Activated CD4-positive, alpha-beta memory T cell treated with anti-CD3 and anti-CD28 coated beads, Interleukin-2, amount 10 ng/mL, durations not matched to agents 7 days and 5 days (primary cell): ENCODE measurements at regions of chr12 and their contacts with region 1.

Region 1: DNA sequence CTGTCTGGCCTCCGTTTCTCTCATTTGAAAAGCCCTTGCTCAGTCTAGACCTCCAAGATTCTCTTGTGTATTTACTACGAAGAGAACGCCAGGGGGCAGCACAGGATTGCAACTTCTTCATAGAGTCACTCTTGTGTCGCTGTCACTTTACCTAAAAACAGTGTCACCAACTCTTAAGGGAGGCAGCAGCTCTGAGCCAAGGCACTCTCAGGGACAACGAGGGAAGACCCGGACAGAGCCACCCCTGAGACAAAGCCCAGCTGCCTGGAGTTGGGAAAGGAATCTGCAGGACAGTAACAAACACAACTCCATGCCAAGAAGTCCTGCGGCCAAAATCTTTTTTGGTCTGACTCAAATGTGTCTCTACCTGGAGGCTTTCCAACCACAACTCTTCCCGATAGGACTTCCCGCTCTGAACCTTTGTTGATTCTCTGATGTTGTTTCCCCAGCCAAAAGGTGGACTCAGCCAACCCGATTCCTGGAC is 9.6 kb upstream of the RPAP3 start:
- DNase-seq: peak; percentile 81
- H3K4me3 Mint-ChIP-seq: no peak overlapping the region
- H3K27ac Mint-ChIP-seq: no peak overlapping the region
- H3K4me1 Mint-ChIP-seq: peaks cover 22% of the 10 kb centered on the region
- H3K27me3 Mint-ChIP-seq: no peaks in the 10 kb centered on the region

Region 2: GRCh38 chr12:47758834-47759690 is 43.6 kb after region 1 on chr12 and contains the start of gene RAPGEF3:
- CTCF ChIA-PET with region 1: interaction called, 53 read pairs
- POLR2A ChIA-PET with region 1: no interaction called
- DNase-seq: peak; percentile 79
- H3K4me3 Mint-ChIP-seq: peak within 1 kb of the TSS; percentile 70
- H3K27ac Mint-ChIP-seq: no peak within 1 kb of the TSS
- H3K4me1 Mint-ChIP-seq: peaks cover 50% of the 10 kb centered on the region
- H3K27me3 Mint-ChIP-seq: peaks cover 2% of the 10 kb centered on the region
- total RNA-seq, gene RAPGEF3: 1.4 to 1.6 TPM

Region 3: DNA sequence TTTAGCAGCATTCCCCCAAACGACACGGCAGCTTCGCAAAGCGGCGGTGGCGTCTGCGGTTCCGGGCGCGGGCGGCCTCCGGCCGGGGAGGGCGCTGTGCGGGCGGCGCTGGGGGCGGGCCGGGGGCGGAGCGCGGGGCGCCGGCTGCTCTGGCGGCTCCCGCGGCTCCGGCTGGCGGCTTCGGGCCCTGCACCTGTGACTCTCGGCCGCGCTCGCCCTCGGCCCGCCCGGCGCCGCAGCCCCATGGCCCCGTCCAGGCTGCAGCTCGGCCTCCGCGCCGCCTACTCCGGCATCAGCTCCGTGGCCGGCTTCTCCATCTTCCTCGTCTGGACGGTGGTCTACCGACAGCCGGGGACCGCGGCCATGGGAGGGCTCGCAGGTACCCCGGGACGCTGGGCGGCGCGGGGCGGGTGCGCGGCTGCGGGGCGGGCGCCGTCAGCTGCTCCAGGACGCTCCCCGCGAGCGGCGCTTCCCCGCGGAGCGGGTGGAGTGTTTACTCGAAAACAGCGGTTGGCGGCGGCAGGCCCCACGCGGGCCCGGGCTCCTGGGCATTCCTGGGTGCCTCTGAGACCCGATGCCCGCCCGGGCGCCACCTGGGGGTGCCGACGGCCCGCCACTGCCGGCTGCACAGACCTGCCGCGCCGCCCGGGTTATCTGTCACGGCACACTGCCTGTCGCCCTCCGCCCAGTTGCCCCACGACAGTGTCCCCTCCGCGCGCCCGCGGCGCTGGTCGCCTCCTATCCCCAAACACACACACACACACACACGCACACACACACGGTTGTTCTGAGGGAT is 57.8 kb after region 1 on chr12 and contains the start of gene SLC48A1:
- CTCF ChIA-PET with region 1: interaction called, 115 read pairs
- POLR2A ChIA-PET with region 1: interaction called, 4 read pairs
- DNase-seq: peak; percentile 75
- H3K4me3 Mint-ChIP-seq: peak within 1 kb of the TSS; percentile 91
- H3K27ac Mint-ChIP-seq: peak within 1 kb of the TSS; percentile 36
- H3K4me1 Mint-ChIP-seq: peaks cover 45% of the 10 kb centered on the region
- H3K27me3 Mint-ChIP-seq: peaks cover 5% of the 10 kb centered on the region
- total RNA-seq, gene SLC48A1: 19.4 to 22.6 TPM

Region 4: DNA sequence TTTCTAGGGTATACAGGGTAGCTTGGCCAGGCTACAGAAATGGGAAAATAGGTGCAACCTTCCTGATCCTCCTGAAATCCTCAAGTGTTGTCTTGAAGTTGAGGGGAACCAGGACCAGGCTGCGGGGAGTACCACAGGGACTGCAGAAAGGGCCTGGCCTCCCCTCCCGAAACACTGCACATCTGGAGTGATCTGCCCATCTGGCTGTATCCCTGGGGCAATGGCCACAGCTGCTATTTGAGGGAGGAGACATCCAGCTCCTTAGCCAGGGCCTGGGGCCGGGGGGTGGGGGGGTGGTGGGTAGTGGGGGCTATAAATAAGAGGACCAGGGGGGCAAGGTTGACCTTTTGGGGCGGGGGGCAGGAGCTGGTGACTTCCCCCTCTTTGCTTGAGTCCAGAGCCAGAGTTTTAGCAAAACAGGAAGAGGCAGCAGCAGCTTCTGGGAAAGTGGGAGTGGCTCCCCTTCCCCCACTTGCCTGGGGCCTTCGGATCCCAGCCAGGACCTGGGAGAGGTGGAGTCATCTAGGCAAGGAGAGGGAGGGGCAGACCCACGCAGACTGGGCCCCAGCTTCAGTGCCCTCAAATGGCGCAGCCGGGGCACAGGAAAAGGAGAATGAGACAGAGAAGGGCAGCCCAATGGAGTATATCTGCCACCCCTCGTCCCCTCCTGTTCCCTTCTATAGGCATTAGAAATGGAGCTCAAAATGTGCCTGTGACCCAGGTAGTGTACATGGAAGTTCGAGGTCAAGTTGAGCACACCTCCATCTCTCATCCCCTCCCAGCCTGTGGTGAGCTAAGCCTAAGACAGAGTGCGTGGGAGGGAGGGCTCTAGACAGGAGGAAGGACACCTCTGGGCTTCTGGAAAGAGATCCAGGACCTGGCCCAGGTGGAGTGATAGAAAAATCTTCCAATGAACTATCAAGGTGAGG is 113.4 kb after region 1 on chr12:
- CTCF ChIA-PET with region 1: interaction called, 19 read pairs
- POLR2A ChIA-PET with region 1: no interaction called
- DNase-seq: no peak
- H3K4me3 Mint-ChIP-seq: no peak overlapping the region
- H3K27ac Mint-ChIP-seq: peak overlapping the region; percentile 70
- H3K4me1 Mint-ChIP-seq: peaks cover 89% of the 10 kb centered on the region
- H3K27me3 Mint-ChIP-seq: no peaks in the 10 kb centered on the region